ENCODE measurements at regions of chr5 and their contacts with region 1.

Region 1: GRCh38 chr5:150560401-150561193 is 52.7 kb downstream of the NDST1 start:
- DNase-seq: peak; percentile 80
- CTCF ChIP-seq: peak; percentile 80

Region 2: GRCh38 chr5:150112261-150113046 is 448.1 kb before region 1 on chr5:
- CTCF ChIA-PET with region 1: no interaction called
- POLR2A ChIA-PET with region 1: no interaction called
- DNase-seq: no peak
- CTCF ChIP-seq: no peak

Region 3: DNA sequence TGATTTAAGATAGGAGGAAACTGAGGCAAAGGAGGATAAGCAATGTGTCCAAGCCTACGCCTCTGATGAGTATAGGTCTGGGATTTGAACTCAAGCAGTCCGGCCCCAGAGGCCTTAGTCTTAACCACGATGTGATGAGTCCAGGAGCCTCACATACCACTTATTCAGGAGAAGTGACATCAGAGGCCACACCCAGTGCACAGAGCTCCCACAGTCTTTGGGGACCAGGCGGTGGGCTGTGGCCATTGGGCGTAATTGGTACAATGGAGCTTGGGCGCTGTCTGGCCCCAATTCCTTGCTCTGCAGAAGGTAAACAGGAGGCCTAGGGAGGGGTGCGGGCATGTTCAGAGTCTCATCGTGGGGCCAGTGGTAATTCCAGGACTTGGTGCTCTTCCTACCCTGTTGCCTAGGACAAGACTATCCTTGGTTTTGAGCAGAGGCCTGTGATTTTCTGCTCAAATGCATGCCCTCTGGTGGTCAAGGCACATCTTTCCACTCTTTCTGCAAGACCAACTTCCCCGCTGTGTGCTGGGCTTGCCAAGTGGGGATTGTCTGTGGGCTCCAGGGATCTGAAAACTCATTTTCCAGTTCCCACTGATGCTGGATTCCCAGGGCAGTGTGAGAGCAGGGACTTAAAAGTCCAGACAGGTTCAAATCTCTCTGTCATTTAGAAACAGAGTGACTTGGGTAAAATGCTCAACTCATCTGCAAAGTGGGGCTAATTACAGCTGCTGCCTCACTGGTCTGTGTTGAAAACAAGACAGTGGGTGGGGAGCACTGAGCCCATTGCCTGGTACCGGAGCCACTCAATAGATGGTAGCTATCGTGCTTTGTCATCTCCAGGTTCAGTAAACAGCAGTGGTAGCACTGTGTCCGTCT is 36.9 kb before region 1 on chr5:
- CTCF ChIA-PET with region 1: interaction called, 21 read pairs
- POLR2A ChIA-PET with region 1: no interaction called
- DNase-seq: peak; percentile 75
- CTCF ChIP-seq: peak; percentile 44

Region 4: GRCh38 chr5:150573867-150574817 is 13.5 kb after region 1 on chr5:
- CTCF ChIA-PET with region 1: interaction called, 18 read pairs
- POLR2A ChIA-PET with region 1: no interaction called
- DNase-seq: no peak
- CTCF ChIP-seq: no peak

Region 5: GRCh38 chr5:150656191-150657132 is 95.9 kb after region 1 on chr5:
- CTCF ChIA-PET with region 1: interaction called, 149 read pairs
- POLR2A ChIA-PET with region 1: no interaction called
- DNase-seq: peak; percentile 92
- CTCF ChIP-seq: peak; percentile 86

Region 6: DNA sequence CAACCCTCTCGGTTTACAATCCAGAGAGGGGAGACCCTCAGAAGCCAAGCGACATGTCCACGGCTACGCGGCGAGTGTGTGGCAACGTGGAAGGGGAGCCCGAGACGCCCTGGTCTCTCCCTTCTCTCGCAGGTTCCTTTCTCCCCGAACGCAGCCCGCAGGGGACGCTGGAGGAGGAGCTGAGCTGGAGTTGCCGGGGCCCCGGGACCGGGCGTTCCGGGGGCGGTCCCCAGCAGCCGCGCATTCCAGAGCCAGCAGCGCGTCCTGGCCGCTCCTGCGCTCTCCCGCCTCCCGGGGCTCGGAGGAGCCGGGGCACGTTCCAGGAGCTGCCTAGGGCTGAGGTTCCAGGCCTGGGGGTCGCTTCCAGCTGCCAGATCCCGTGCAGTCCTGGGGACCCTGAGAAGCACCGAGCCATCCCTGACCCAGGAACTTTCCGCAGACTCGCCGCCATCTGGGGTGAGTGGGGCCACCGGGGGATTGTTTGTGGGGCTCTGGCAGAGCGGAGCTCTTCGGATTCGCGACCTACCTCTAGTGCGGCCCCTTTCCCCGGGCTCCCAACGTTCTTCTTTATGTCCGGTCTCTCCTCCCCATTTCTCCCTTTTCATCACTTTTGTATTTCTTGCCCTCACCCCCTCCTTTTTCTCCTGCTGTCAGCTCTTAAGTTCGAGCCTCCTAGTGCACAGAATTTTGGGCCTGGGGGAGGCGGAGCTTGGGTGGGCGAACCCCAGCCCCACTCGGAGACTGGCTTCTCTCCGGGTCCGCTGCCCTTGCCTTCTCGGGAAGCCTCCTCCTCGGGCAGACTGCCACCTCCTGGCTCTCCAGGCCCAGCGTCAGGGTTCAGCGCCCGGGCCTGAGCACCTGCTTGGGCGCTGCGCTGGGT is 218.2 kb after region 1 on chr5 and contains the start of gene SMIM3:
- CTCF ChIA-PET with region 1: interaction called, 13 read pairs
- POLR2A ChIA-PET with region 1: no interaction called
- DNase-seq: peak; percentile 69
- CTCF ChIP-seq: peak; percentile 85

Region 7: DNA sequence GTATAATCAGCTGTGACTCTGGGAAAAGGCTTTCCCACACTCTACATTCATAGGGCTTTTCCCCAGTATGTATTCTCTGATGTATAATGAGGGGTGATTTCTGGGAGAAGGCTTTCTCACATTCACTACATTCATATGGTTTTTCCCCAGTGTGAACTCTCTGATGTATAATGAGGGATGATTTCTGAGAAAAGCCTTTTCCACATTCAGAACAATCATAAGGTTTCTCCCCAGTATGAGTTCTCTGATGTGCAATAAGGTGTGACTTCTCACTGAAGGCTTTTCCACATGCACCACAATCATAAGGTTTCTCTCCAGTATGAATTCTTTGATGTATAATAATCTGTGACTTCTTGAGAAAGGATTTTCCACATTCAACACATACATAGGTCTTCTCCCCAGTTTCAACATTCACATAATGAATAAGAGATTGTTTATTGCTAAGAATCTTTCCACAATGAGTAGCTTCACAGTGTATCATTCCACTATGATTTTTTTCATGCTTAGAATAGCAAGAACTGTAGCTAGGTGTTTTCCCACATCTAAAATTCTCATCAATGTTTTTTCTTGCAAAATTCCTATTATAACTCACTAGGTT is 370.9 kb after region 1 on chr5:
- CTCF ChIA-PET with region 1: no interaction called
- POLR2A ChIA-PET with region 1: no interaction called
- DNase-seq: no peak
- CTCF ChIP-seq: no peak

Measured in GM10248 (cell line).